ENCODE measurements at regions of chrX and their contacts with region 1.

Region 1: DNA sequence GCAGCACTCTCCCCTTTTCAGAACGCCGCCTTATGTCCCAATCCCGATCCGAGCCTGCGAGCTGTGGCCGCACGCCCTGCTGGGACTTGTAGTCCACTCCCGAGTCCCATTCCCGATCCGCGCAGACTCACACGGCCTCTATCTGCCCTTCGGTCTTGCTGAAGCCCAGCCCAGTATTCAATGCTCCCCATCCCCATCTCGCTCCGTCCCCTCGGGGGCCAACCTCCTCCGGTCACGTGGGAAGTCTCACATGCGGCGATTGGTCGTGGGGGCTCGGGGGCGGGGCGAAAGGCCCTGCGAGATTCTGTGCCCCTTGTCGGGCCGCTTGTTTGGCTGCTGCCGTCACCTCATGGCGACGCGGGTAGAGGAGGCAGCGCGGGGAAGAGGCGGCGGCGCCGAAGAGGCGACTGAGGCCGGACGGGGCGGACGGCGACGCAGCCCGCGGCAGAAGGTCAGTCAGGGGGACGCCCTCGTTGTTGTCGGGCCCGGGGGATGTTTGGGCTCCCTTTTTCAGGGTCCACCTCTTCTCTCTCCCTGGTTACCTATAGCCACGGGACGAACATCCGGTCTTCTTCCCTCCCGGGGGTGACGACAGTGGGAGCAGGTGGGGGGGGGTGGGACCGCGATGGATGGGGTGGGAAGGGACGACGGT is at the start of gene TXLNG:
- DNase-seq: peak; percentile 97 to 99
- H3K4me3 ChIP-seq: peak within 1 kb of the TSS; percentile 69 to 79
- H3K27ac ChIP-seq: peak within 1 kb of the TSS; percentile 91 to 92
- H3K4me1 ChIP-seq: peaks cover 0 to 14% (median 0%) of the 10 kb centered on the region in 4 donors
- H3K27me3 ChIP-seq: no peaks in the 10 kb centered on the region
- CTCF ChIP-seq: no peak

Region 2: GRCh38 chrX:16892504-16893362 is 106.5 kb after region 1 on chrX:
- intact Hi-C with region 1: no loop called
- DNase-seq: peak; percentile 72 to 73
- H3K4me3 ChIP-seq: no peak overlapping the region
- H3K27ac ChIP-seq: no peak overlapping the region
- H3K4me1 ChIP-seq: no peaks in the 10 kb centered on the region
- H3K27me3 ChIP-seq: no peaks in the 10 kb centered on the region
- CTCF ChIP-seq: peak; percentile 61 to 65

Region 3: DNA sequence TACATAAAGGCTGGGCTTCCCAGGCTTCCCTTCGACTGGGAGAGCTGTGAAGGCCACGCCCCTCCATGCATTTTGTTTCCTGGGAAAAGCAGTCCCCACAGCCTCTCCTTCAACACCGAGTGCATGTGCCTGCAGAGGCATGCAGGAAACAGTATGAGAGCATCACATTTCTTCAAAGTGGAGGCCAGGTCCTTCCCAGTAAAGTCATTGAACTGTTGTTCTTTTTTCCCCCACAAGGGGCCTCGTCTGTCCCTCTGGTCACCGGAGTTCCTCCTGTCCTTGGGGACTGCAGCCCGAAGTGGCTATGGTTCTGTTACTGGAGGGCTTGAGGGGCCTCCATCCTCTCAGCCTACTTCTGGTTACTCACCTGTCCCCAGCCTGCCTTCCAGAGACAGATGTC is 1018.9 kb after region 1 on chrX:
- intact Hi-C with region 1: loop called (anchors 10 kb)
- DNase-seq: no peak
- H3K4me3 ChIP-seq: no peak overlapping the region
- H3K27ac ChIP-seq: no peak overlapping the region
- H3K4me1 ChIP-seq: no peaks in the 10 kb centered on the region
- H3K27me3 ChIP-seq: no peaks in the 10 kb centered on the region
- CTCF ChIP-seq: no peak